CD4-positive, alpha-beta memory T cell (primary cell): ENCODE measurements at regions of chr12 and their contacts with region 1.

Region 1: DNA sequence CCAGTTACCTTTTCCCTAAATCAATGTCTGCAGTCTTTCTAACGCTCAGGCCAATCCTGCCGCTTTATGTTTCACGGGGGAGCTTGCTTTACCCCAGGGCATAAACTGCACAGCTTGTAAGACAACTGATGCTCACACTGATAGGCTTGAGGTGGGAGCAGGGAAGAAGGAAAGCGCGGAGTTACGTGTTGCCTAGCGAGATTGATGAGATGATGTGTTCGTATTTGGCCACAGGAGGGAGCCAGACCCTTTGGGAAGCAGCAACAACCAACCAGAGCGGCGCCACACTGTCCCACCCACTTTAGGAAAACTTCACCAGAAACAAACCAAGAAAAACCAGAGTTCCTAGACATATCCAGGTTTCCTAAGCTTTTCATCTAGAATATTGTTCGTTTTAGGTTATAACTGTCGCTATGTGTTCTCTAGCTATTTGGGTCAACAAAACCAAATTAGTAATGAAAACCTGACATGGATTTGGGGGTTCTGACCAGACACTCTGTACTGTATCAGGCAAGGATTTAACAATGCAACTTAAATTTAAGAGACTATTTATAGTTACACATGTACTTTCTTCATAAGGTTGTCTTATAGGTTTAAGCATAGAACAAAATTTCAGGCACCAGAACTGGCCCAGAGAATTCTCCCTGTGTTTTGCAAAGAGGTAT is 2.4 kb downstream of the IL26 start:
- DNase-seq: peak; percentile 68 to 71 (median 69)
- H3K4me3 ChIP-seq: no peak overlapping the region
- H3K4me3 Mint-ChIP-seq: peak overlapping the region in 7 of 8 donors; percentile 32 to 82 (median 75)
- H3K27ac ChIP-seq: no peak overlapping the region
- H3K27ac Mint-ChIP-seq: peak overlapping the region in 5 of 7 donors; percentile 10 to 93 (median 71)
- H3K4me1 ChIP-seq: peaks cover 7% of the 10 kb centered on the region
- H3K4me1 Mint-ChIP-seq: peaks cover 8 to 14% (median 10%) of the 10 kb centered on the region in 4 donors
- H3K27me3 ChIP-seq: no peaks in the 10 kb centered on the region
- H3K27me3 Mint-ChIP-seq: no peaks in the 10 kb centered on the region

Region 2: GRCh38 chr12:66851134-66851533 is 1372.1 kb before region 1 on chr12:
- CTCF ChIA-PET with region 1: no interaction called
- POLR2A ChIA-PET with region 1: no interaction called
- intact Hi-C with region 1: no loop called
- DNase-seq: no peak
- H3K4me3 ChIP-seq: no peak overlapping the region
- H3K4me3 Mint-ChIP-seq: no peak overlapping the region
- H3K27ac ChIP-seq: no peak overlapping the region
- H3K27ac Mint-ChIP-seq: no peak overlapping the region
- H3K4me1 ChIP-seq: peaks cover 4% of the 10 kb centered on the region
- H3K4me1 Mint-ChIP-seq: no peaks in the 10 kb centered on the region
- H3K27me3 ChIP-seq: no peaks in the 10 kb centered on the region
- H3K27me3 Mint-ChIP-seq: peaks cover 0 to 5% of the 10 kb centered on the region in 2 donors

Region 3: DNA sequence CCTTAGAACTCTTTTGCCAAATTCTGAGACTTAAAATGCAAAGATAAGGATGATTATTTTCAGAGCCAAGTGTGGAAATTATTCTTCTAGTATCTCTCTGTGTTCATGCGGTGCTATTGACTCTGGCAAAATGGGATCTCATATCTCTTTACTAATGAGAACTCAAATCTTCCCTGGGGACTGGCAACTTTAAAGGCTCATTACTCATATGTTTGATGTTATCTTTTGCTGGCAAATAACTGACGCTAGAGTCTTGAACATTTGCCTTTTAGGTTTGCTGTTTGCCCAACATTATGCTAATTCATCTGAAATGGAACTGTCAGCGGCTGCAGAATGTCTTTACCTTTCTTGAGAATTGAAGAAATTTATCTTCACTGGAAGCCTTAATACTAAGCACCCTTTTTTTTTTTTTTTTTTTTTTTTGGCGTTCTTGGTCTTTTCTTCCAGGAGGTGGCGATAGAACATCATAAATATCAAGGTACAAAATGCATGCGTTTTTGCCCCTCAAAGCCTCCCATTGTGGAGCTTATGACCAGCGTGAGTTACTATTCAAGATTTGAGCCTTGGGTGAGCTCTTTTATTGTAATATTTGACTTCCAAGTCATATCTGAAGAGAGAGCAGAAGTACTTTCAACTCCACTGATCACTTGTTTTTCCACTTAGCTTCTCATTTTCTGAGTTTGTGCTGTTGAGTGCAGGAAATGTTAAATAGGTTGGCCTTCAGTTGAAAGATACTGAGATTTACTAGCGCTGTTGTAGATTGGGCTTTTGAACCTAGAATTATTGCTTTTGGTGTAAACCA is 867.4 kb before region 1 on chr12:
- CTCF ChIA-PET with region 1: interaction called, 6 read pairs
- POLR2A ChIA-PET with region 1: no interaction called
- intact Hi-C with region 1: loop called (anchors 10 kb)
- DNase-seq: peak; percentile 37 to 55 (median 52)
- H3K4me3 ChIP-seq: no peak overlapping the region
- H3K4me3 Mint-ChIP-seq: peak overlapping the region in 4 of 8 donors; percentile 39 to 63 (median 48)
- H3K27ac ChIP-seq: no peak overlapping the region
- H3K27ac Mint-ChIP-seq: peak overlapping the region in 2 of 7 donors; percentile 3 to 27
- H3K4me1 ChIP-seq: peaks cover 12% of the 10 kb centered on the region
- H3K4me1 Mint-ChIP-seq: peaks cover 7 to 16% (median 10%) of the 10 kb centered on the region in 4 donors
- H3K27me3 ChIP-seq: no peaks in the 10 kb centered on the region
- H3K27me3 Mint-ChIP-seq: no peaks in the 10 kb centered on the region

Region 4: DNA sequence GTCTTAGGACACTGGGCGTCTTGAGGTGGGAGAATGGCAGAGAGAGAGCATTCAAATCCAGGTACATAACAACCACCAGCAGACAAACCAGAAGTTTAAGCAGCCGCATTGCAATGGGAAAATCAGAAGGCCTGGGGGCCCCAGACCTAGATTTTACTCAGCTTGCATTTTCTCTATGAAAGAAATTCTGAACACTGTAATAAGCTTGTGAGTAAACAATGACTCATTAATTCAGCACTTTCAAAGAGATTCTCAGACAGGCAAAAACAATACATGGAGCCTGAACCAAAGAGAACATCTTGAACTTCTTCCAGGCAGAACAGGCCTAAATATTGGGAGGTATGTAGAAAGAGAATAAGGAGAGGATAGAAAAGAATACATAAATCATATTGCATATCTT is 303.8 kb before region 1 on chr12:
- CTCF ChIA-PET with region 1: no interaction called
- POLR2A ChIA-PET with region 1: no interaction called
- intact Hi-C with region 1: no loop called
- DNase-seq: no peak
- H3K4me3 ChIP-seq: no peak overlapping the region
- H3K4me3 Mint-ChIP-seq: no peak overlapping the region
- H3K27ac ChIP-seq: no peak overlapping the region
- H3K27ac Mint-ChIP-seq: no peak overlapping the region
- H3K4me1 ChIP-seq: no peaks in the 10 kb centered on the region
- H3K4me1 Mint-ChIP-seq: peaks cover 0 to 3% (median 1%) of the 10 kb centered on the region in 4 donors
- H3K27me3 ChIP-seq: no peaks in the 10 kb centered on the region
- H3K27me3 Mint-ChIP-seq: peaks cover 0 to 5% of the 10 kb centered on the region in 2 donors

Region 5: DNA sequence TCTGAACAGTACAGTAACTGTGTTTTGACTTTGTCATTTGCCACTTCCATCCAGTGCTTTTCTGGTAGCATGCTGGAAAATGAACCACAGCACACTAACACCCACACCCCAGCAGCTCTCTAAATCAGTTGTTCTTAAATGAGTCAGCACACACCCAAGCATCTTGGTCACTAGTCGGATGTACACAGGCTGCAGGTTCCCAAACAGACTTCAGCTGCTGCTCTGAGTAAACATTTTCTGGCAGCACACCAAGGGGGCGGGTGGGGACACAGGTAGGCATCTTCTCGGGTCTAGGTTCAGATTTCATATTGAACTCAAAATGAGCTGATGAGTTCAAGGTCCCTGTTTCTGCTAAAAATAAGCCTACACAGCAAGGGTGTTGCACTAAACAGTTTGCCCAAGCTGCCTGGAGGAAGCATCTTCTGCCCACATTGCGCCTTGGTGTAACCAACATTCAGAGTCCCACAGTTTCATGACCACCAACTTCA is 103.4 kb before region 1 on chr12:
- CTCF ChIA-PET with region 1: interaction called, 6 read pairs
- POLR2A ChIA-PET with region 1: no interaction called
- intact Hi-C with region 1: loop called (anchors 2 kb)
- DNase-seq: peak in 2 of 5 donors; percentile 18 to 60
- H3K4me3 ChIP-seq: no peak overlapping the region
- H3K4me3 Mint-ChIP-seq: peak overlapping the region in 6 of 8 donors; percentile 8 to 52 (median 26)
- H3K27ac ChIP-seq: no peak overlapping the region
- H3K27ac Mint-ChIP-seq: peak overlapping the region; percentile 6 to 70 (median 47)
- H3K4me1 ChIP-seq: peaks cover 45% of the 10 kb centered on the region
- H3K4me1 Mint-ChIP-seq: peaks cover 23 to 32% (median 24%) of the 10 kb centered on the region in 4 donors
- H3K27me3 ChIP-seq: no peaks in the 10 kb centered on the region
- H3K27me3 Mint-ChIP-seq: peaks cover 0 to 1% of the 10 kb centered on the region in 2 donors

Region 6: DNA sequence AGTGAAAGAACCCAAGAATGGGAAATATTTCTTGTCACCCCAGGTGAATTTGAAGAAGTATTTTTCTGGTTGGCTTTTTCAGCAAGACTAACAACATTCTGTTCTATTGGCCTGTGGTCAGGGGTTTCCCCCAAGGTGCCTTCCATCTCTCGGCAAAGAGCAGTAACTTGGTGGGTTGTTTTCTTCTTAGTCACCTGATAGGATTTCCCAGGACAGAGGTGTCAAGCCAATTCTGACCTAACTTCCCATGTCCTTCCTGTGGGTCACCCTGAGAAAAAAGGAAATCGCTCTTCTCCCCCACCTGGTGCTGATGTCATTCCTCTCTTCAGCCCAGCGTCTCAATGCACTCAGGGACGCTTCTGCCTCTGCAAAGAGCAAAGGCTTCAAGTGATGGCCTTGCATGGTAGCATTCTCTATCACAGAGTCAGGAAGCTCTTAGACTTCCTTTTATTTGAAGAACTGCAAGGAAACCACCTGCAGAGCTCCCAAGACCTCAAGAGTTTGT is 47.6 kb before region 1 on chr12:
- CTCF ChIA-PET with region 1: interaction called, 28 read pairs
- POLR2A ChIA-PET with region 1: interaction called, 3 read pairs
- intact Hi-C with region 1: loop called (anchors 5 kb)
- DNase-seq: peak; percentile 81 to 90 (median 82)
- H3K4me3 ChIP-seq: peak overlapping the region in 1 of 2 donors; percentile 27
- H3K4me3 Mint-ChIP-seq: peak overlapping the region; percentile 71 to 90 (median 78)
- H3K27ac ChIP-seq: peak overlapping the region; percentile 58
- H3K27ac Mint-ChIP-seq: peak overlapping the region; percentile 90 to 97 (median 92)
- H3K4me1 ChIP-seq: peaks cover 49% of the 10 kb centered on the region
- H3K4me1 Mint-ChIP-seq: peaks cover 37 to 61% (median 49%) of the 10 kb centered on the region in 4 donors
- H3K27me3 ChIP-seq: no peaks in the 10 kb centered on the region
- H3K27me3 Mint-ChIP-seq: no peaks in the 10 kb centered on the region

Region 7: DNA sequence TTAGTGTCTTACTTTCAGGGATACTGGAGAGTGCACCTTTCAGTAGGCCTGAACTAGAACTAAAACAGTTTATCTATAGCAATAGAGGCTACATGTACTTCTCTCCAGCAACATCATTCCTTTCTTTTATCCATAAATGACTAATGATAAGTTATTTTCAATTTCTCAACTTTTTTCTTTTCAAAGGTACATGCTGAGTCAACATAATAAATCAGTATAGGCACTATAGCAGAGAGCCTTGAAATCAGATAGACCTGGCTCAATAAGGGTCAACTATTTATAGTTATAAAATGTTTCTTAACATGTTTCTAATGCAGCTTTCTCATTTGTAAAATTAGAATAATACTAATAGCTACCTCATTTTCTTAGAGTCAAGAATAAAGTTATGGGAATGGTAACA is 24.6 kb after region 1 on chr12:
- CTCF ChIA-PET with region 1: interaction called, 16 read pairs
- POLR2A ChIA-PET with region 1: no interaction called
- intact Hi-C with region 1: no loop called
- DNase-seq: no peak
- H3K4me3 ChIP-seq: no peak overlapping the region
- H3K4me3 Mint-ChIP-seq: no peak overlapping the region
- H3K27ac ChIP-seq: no peak overlapping the region
- H3K27ac Mint-ChIP-seq: no peak overlapping the region
- H3K4me1 ChIP-seq: no peaks in the 10 kb centered on the region
- H3K4me1 Mint-ChIP-seq: peaks cover 0 to 5% (median 4%) of the 10 kb centered on the region in 4 donors
- H3K27me3 ChIP-seq: no peaks in the 10 kb centered on the region
- H3K27me3 Mint-ChIP-seq: peaks cover 4% of the 10 kb centered on the region in 2 donors

Region 8: GRCh38 chr12:68317047-68317667 is 93.9 kb after region 1 on chr12:
- CTCF ChIA-PET with region 1: interaction called, 139 read pairs
- POLR2A ChIA-PET with region 1: interaction called, 12 read pairs
- intact Hi-C with region 1: loop called (anchors 1 kb)
- DNase-seq: peak in 4 of 5 donors; percentile 48 to 58 (median 54)
- H3K4me3 ChIP-seq: no peak overlapping the region
- H3K4me3 Mint-ChIP-seq: no peak overlapping the region
- H3K27ac ChIP-seq: no peak overlapping the region
- H3K27ac Mint-ChIP-seq: no peak overlapping the region
- H3K4me1 ChIP-seq: no peaks in the 10 kb centered on the region
- H3K4me1 Mint-ChIP-seq: peaks cover 0 to 2% (median 0%) of the 10 kb centered on the region in 4 donors
- H3K27me3 ChIP-seq: no peaks in the 10 kb centered on the region
- H3K27me3 Mint-ChIP-seq: no peaks in the 10 kb centered on the region

Region 9: DNA sequence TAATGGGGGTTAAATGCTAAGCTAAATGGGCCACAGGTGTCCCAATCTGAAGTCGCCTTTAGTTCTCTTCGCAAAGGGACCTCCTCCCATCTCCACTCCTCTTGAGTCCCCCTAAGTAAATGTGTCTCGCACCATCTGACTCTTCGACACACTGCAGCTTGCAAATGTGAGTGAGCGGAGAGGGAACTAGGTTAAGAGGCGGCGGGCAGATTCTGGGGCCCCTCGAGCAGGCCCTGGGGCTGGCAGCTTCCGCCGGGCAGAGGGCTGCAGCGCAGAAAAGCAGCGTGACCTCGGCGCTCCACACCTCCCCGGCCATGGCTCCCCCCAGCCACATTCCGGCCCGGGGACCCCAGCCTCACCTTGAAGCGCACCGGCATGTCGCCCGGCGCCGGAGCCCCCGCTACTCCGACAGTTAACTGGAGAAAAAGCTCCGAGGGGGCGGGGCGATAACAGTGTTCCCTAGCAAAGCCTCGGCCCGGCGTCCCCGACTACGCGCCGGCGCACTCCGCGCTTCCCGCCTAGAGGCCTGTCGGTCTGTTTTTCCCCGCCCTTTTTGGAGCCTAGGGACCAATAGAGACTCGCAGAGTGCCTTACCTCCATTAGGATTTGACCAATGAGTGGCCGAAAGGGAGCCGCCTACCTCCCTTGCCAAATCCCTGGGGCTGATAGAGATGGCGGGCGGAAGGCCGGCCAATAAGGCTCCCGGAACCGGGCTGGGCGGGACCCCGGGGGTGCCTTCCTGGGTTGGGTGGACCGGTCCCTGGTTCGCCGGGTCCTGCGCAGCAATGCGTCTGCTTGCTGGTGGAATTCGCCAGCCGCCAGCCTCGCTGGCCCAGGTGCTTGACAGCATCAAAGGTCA is 108.9 kb after region 1 on chr12 and contains the start of gene MDM1:
- CTCF ChIA-PET with region 1: interaction called, 15 read pairs
- POLR2A ChIA-PET with region 1: interaction called, 3 read pairs
- intact Hi-C with region 1: no loop called
- DNase-seq: peak; percentile 95 to 98 (median 96)
- H3K4me3 ChIP-seq: peak within 1 kb of the TSS; percentile 60 to 77
- H3K4me3 Mint-ChIP-seq: peak within 1 kb of the TSS; percentile 88 to 93 (median 90)
- H3K27ac ChIP-seq: peak within 1 kb of the TSS; percentile 58
- H3K27ac Mint-ChIP-seq: peak within 1 kb of the TSS; percentile 64 to 95 (median 91)
- H3K4me1 ChIP-seq: peaks cover 30% of the 10 kb centered on the region
- H3K4me1 Mint-ChIP-seq: peaks cover 32 to 49% (median 42%) of the 10 kb centered on the region in 4 donors
- H3K27me3 ChIP-seq: no peaks in the 10 kb centered on the region
- H3K27me3 Mint-ChIP-seq: peaks cover 0 to 2% of the 10 kb centered on the region in 2 donors
- total RNA-seq, gene MDM1: 27.0 to 29.4 TPM